ENCODE measurements at regions of chr11 and their contacts with region 1.

Region 1: GRCh38 chr11:30914143-30914762 is 328.1 kb upstream of the MPPED2 start:
- DNase-seq: peak in 5 of 35 experiments; percentile 0 to 3 (median 1)
- ATAC-seq: no peak
- H3K4me3 ChIP-seq: no peak overlapping the region
- H3K4me3 Mint-ChIP-seq: no peak overlapping the region
- H3K27ac ChIP-seq: no peak overlapping the region
- H3K27ac Mint-ChIP-seq: no peak overlapping the region
- H3K4me1 ChIP-seq: no peaks in the 10 kb centered on the region
- H3K4me1 Mint-ChIP-seq: no peaks in the 10 kb centered on the region
- H3K27me3 ChIP-seq: no peaks in the 10 kb centered on the region
- H3K27me3 Mint-ChIP-seq: peaks cover 0 to 7% of the 10 kb centered on the region in 2 donors

Region 2: DNA sequence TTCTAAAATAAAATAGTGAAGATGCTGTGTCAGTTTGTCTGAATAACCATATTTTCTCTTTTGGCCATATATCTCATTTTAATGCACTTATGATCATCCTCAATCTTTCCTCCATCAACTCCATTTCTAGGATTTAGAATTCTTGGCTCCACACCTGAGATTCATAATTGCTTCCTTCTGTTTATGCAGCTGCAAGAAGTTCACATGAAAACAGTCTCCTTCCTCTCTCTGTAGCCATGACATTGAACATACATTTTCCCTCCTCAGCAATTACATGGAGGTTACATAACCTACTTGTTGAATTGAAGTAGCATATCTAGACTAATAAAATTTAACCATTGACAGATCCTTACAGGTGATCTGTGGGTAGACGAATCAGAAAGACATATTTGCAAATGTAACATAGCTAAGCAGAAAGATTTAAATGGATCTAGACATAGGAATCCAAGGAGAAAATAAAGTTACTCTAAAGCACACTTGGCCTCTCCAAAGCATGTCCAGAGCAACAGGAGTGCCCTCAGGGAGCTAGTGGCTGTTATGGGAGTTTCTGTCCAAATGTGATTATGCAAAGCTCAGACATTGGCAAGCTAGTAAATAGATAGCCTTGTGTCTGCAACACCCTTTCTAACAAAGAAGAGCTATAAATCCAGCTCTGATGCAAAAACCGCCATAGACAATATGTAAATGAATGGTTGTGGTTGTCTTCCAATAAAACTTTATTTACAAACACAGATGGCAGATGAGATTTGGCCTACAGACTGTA is 208.2 kb before region 1 on chr11:
- CTCF ChIA-PET with region 1: interaction called in 1 of 2 experiments, 12 read pairs
- POLR2A ChIA-PET with region 1: no interaction called
- DNase-seq: no peak
- ATAC-seq: no peak
- H3K4me3 ChIP-seq: no peak overlapping the region
- H3K4me3 Mint-ChIP-seq: no peak overlapping the region
- H3K27ac ChIP-seq: no peak overlapping the region
- H3K27ac Mint-ChIP-seq: no peak overlapping the region
- H3K4me1 ChIP-seq: no peaks in the 10 kb centered on the region
- H3K4me1 Mint-ChIP-seq: no peaks in the 10 kb centered on the region
- H3K27me3 ChIP-seq: no peaks in the 10 kb centered on the region
- H3K27me3 Mint-ChIP-seq: no peaks in the 10 kb centered on the region

Region 3: DNA sequence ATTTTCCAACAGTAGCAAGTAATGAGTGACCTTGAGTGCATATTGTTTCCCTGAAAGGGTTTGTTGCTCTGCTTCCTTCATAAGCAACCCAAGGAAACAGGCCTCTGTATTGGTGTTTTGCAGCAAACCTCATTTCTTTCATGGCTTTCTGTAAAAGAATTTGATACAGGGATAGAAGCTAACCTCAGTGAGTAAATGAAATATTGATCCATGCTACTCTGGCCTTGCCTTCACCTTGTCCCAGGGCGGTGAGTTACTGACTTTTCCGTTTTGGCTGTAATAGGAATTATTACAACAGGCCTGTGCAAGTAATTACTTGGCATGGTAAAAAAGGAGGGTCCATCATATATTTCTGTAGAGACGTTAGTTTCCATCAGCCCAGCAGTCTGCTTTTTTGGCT is 197.2 kb before region 1 on chr11:
- CTCF ChIA-PET with region 1: no interaction called
- POLR2A ChIA-PET with region 1: no interaction called
- DNase-seq: no peak
- ATAC-seq: no peak
- H3K4me3 ChIP-seq: no peak overlapping the region
- H3K4me3 Mint-ChIP-seq: no peak overlapping the region
- H3K27ac ChIP-seq: no peak overlapping the region
- H3K27ac Mint-ChIP-seq: no peak overlapping the region
- H3K4me1 ChIP-seq: no peaks in the 10 kb centered on the region
- H3K4me1 Mint-ChIP-seq: no peaks in the 10 kb centered on the region
- H3K27me3 ChIP-seq: no peaks in the 10 kb centered on the region
- H3K27me3 Mint-ChIP-seq: no peaks in the 10 kb centered on the region

Region 4: DNA sequence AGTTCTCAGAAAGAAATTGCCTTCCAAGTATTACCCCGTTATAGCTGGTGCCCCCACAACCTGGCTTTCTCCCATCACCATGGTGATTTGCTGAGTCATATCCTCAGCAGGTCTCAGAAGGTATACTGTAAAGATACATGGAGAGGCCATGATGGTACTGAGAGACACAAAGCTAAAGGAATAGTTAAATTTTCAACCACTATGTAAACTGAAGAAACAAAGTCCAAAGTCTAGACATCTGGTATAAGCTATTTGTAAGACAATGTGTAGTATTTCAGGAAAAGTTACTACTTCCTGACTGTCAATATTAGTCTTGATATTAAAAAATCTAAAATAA is 78.2 kb after region 1 on chr11:
- CTCF ChIA-PET with region 1: no interaction called
- POLR2A ChIA-PET with region 1: no interaction called
- DNase-seq: no peak
- ATAC-seq: no peak
- H3K4me3 ChIP-seq: no peak overlapping the region
- H3K4me3 Mint-ChIP-seq: no peak overlapping the region
- H3K27ac ChIP-seq: no peak overlapping the region
- H3K27ac Mint-ChIP-seq: no peak overlapping the region
- H3K4me1 ChIP-seq: no peaks in the 10 kb centered on the region
- H3K4me1 Mint-ChIP-seq: no peaks in the 10 kb centered on the region
- H3K27me3 ChIP-seq: no peaks in the 10 kb centered on the region
- H3K27me3 Mint-ChIP-seq: no peaks in the 10 kb centered on the region

Measured in T-cell (primary cell).